Natural killer cell (primary cell): ENCODE measurements at regions of chr1 and their contacts with region 1.

Region 1: GRCh38 chr1:2194898-2195673 is 514 bp upstream of the FAAP20 start:
- DNase-seq: peak; percentile 89 to 92
- ATAC-seq: peak; percentile 69 to 84 (median 70)
- H3K4me3 ChIP-seq: peak overlapping the region; percentile 32
- H3K4me3 Mint-ChIP-seq: peak overlapping the region; percentile 90
- H3K27ac ChIP-seq: peak overlapping the region; percentile 88
- H3K27ac Mint-ChIP-seq: peak overlapping the region; percentile 91 to 94
- H3K4me1 ChIP-seq: peaks cover 46% of the 10 kb centered on the region
- H3K4me1 Mint-ChIP-seq: peaks cover 16 to 27% of the 10 kb centered on the region in 2 donors
- H3K27me3 ChIP-seq: no peaks in the 10 kb centered on the region
- H3K27me3 Mint-ChIP-seq: no peaks in the 10 kb centered on the region
- CTCF ChIP-seq: peak; percentile 90

Region 2: DNA sequence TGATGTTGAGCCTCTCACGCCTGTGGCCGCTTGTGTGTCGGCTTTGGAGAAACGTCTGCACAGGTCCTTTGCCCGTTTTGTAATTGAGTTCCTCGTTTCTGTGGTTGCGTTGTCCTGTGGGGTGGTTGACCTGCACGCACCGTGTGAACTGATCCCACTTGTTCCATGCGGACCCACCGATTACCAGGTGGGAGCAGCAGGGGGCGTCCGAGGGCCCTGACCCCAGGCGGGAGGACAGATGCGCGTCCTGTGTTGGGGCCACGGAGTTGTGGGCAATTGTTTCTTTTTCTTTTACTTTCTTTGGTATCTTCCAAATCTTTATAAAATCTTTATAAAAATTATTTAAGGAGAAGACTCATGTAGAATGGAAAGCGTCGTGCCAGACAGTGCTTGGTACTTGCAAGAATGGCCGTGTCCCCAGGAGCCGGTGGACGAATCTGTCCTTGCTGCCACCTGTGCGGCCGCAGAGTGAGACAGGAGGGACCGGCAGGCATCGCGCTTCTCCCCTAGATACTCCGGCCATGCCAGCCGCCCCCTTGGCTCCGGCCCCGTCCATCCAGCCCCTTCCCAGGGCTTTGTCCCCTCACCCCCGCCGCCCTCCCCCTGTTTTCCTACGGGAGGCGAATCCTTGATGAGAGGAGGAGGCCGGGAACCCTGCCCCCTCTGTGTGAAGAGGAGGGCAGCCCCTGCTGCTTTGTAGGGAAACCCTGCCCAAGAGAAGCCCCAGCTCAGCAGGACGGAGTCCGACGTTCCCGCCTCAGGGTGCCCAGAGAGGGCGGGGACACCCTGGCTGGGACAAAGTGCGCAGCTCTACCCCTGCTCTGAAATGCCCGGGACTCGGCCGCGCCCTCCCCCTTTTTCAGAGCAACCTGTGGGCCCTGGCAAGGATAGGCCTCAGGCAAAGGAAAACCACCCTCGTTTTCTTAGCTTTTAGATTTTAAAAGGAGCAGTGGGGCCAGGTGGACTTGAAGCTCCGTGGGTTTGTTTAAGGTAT is 103.2 kb before region 1 on chr1:
- intact Hi-C with region 1: no loop called
- DNase-seq: peak in 1 of 2 donors; percentile 60
- ATAC-seq: peak in 2 of 3 donors; percentile 40 to 59
- H3K4me3 ChIP-seq: no peak overlapping the region
- H3K4me3 Mint-ChIP-seq: no peak overlapping the region
- H3K27ac ChIP-seq: no peak overlapping the region
- H3K27ac Mint-ChIP-seq: no peak overlapping the region
- H3K4me1 ChIP-seq: no peaks in the 10 kb centered on the region
- H3K4me1 Mint-ChIP-seq: no peaks in the 10 kb centered on the region
- H3K27me3 ChIP-seq: no peaks in the 10 kb centered on the region
- H3K27me3 Mint-ChIP-seq: no peaks in the 10 kb centered on the region
- CTCF ChIP-seq: peak; percentile 45

Region 3: DNA sequence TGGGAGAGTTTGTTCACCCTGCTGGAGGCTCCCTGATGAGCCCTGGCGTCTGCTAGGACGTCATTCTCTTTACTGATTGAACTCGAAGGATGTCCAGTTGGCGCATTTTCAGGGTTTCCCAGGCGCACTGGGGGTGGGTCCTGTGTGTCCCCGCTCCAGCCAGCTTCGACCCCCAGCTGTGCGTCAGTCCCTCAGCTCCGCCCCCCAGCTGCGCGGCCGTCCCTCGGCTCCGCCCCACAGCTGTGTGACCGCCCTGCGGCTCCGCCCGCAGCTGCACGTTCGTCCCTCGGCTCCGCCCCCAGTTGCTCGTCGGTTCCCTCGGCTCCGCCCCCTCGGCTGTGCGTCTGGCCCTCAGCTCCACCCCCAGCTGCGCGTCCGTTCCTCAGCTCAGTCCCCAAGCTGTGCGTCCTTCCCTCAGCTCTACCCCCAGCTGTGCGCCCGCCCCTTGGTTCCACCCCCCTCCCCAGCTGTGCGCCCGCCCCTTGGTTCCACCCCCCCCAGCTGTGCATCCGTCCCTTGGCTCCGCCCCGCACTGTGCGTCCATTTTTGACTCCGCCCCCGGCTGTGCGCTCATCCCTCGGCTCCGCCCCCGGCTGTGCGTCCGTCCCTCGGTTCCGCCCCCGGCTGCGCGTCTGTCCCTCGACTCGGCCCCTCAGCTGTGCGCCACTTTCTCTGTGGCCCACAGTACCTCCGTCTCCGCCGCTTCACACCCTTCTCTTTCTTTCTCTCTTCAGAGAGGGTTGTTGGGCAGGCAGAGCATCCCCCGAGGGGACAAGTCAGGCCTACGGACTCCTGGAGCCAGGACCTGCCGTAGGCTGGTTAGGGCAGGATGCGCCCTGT is 61.8 kb before region 1 on chr1:
- intact Hi-C with region 1: loop called (anchors 1 kb)
- DNase-seq: peak; percentile 98 to 100
- ATAC-seq: peak; percentile 88 to 96 (median 89)
- H3K4me3 ChIP-seq: peak overlapping the region; percentile 50
- H3K4me3 Mint-ChIP-seq: peak overlapping the region; percentile 90
- H3K27ac ChIP-seq: peak overlapping the region; percentile 86
- H3K27ac Mint-ChIP-seq: peak overlapping the region; percentile 94
- H3K4me1 ChIP-seq: peaks cover 19% of the 10 kb centered on the region
- H3K4me1 Mint-ChIP-seq: peaks cover 12 to 13% of the 10 kb centered on the region in 2 donors
- H3K27me3 ChIP-seq: no peaks in the 10 kb centered on the region
- H3K27me3 Mint-ChIP-seq: no peaks in the 10 kb centered on the region
- CTCF ChIP-seq: no peak

Region 4: DNA sequence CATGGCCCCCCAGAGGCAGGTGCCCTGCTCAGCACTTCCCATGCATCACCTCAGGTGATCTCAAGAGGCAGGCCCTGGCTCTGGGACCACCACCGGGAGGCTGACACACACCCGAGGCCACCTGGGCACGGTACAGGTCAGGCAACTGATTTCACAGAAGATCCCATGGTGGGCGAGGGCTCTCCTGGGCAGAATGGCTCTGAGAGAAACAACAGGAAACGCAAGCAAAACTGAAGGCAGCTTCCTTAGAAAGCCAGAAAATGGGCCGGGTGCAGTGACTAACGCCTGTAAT is 21.6 kb after region 1 on chr1:
- intact Hi-C with region 1: no loop called
- DNase-seq: no peak
- ATAC-seq: no peak
- H3K4me3 ChIP-seq: no peak overlapping the region
- H3K4me3 Mint-ChIP-seq: no peak overlapping the region
- H3K27ac ChIP-seq: no peak overlapping the region
- H3K27ac Mint-ChIP-seq: no peak overlapping the region
- H3K4me1 ChIP-seq: peaks cover 16% of the 10 kb centered on the region
- H3K4me1 Mint-ChIP-seq: peaks cover 0 to 4% of the 10 kb centered on the region in 2 donors
- H3K27me3 ChIP-seq: peaks cover 5% of the 10 kb centered on the region
- H3K27me3 Mint-ChIP-seq: peaks cover 0 to 12% of the 10 kb centered on the region in 2 donors
- CTCF ChIP-seq: no peak

Region 5: GRCh38 chr1:2229037-2229864 is 34.2 kb after region 1 on chr1:
- intact Hi-C with region 1: loop called (anchors 5 kb)
- DNase-seq: peak; percentile 61 to 76
- ATAC-seq: peak; percentile 7 to 9 (median 8)
- H3K4me3 ChIP-seq: peak overlapping the region; percentile 58
- H3K4me3 Mint-ChIP-seq: peak overlapping the region; percentile 93
- H3K27ac ChIP-seq: peak overlapping the region; percentile 73
- H3K27ac Mint-ChIP-seq: peak overlapping the region; percentile 85 to 97
- H3K4me1 ChIP-seq: peaks cover 63% of the 10 kb centered on the region
- H3K4me1 Mint-ChIP-seq: peaks cover 38 to 60% of the 10 kb centered on the region in 2 donors
- H3K27me3 ChIP-seq: no peaks in the 10 kb centered on the region
- H3K27me3 Mint-ChIP-seq: peaks cover 0 to 2% of the 10 kb centered on the region in 2 donors
- CTCF ChIP-seq: no peak

Region 6: DNA sequence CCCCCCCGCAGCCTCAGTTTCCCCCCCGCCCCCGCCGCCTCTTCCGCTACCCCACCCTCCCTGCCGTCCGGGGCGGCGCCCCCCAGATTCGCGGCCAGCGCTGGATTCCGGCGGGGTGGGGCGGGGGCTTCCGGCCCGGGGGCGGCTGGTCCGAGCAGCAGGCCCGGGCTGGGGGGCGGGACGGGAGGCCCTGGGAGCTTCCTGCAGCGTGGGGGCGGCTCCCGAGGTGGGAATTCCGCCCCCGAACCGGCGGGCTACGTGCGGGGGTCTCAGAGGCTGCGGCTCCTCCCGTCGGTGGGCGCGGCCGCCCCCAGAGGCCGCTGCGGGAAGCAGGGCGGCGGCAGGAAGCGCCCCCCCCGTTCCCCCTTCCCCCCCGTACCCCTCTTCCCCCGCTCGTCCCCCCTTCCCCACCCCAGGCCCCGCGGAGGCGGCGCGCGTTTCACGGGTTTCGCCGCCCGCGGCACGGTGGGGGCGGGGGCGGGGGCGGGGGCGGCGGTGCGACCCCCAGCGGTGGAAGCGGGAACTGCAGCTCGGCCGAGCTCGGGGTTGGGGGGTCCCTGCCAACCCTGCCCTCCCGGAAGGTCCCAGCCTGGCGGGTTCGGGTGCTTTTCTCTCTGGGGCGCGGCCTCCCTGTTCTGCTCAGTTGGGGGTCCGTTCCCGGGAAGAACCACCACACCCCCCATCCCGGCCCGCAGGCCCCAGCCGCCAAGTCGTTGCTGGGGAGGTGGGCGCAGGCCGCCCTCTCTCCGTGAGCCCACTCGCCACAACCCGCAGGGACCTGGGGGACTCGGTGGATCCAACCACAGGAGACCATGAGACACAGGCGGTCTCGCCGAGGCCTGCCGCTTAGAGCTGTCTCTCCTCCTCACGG is 120.0 kb after region 1 on chr1:
- intact Hi-C with region 1: loop called (anchors 2 kb)
- DNase-seq: peak; percentile 67 to 86
- ATAC-seq: peak; percentile 72 to 84 (median 78)
- H3K4me3 ChIP-seq: peak overlapping the region; percentile 47
- H3K4me3 Mint-ChIP-seq: peak overlapping the region; percentile 66
- H3K27ac ChIP-seq: peak overlapping the region; percentile 83
- H3K27ac Mint-ChIP-seq: peak overlapping the region; percentile 69 to 83
- H3K4me1 ChIP-seq: peaks cover 58% of the 10 kb centered on the region
- H3K4me1 Mint-ChIP-seq: peaks cover 0 to 22% of the 10 kb centered on the region in 2 donors
- H3K27me3 ChIP-seq: no peaks in the 10 kb centered on the region
- H3K27me3 Mint-ChIP-seq: no peaks in the 10 kb centered on the region
- CTCF ChIP-seq: peak; percentile 99

Region 7: DNA sequence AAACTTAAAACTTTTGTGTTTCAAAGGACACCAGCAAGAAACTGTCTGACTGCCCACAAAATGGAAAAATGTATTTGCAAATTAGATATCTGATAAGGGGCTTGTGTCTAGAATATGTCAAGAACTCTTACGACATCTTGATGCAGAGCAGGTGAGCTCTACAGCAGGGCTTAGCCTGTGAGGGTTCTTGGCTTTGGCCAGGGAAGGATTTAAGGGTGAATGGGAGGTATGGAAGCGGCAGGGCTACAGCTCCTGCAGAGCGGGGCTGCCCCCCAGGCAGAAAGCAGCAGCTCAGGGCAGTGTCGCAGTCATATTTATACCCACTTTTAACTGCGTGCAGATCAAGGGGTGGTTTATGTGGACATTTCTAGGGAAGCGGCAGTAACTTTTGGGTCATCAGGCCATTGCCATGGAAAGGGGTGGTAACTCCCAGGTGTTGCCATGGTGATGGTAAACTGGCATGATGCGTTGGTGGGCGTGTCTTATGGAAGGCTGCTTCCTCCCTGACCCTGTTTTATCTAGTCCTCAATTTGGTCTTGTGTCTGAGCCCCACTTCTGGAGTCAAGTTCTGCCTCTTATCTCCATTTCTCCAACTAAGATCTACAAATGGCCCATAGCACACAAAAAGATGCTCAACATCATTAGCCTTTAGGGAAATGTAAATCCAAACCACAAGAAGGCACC is 173.1 kb after region 1 on chr1:
- intact Hi-C with region 1: no loop called
- DNase-seq: no peak
- ATAC-seq: no peak
- H3K4me3 ChIP-seq: no peak overlapping the region
- H3K4me3 Mint-ChIP-seq: no peak overlapping the region
- H3K27ac ChIP-seq: no peak overlapping the region
- H3K27ac Mint-ChIP-seq: no peak overlapping the region
- H3K4me1 ChIP-seq: no peaks in the 10 kb centered on the region
- H3K4me1 Mint-ChIP-seq: no peaks in the 10 kb centered on the region
- H3K27me3 ChIP-seq: no peaks in the 10 kb centered on the region
- H3K27me3 Mint-ChIP-seq: no peaks in the 10 kb centered on the region
- CTCF ChIP-seq: no peak

Region 8: GRCh38 chr1:2381741-2382620 is 186.9 kb after region 1 on chr1:
- intact Hi-C with region 1: loop called (anchors 1 kb)
- DNase-seq: peak; percentile 74 to 86
- ATAC-seq: peak; percentile 86 to 100 (median 96)
- H3K4me3 ChIP-seq: no peak overlapping the region
- H3K4me3 Mint-ChIP-seq: no peak overlapping the region
- H3K27ac ChIP-seq: no peak overlapping the region
- H3K27ac Mint-ChIP-seq: no peak overlapping the region
- H3K4me1 ChIP-seq: peaks cover 22% of the 10 kb centered on the region
- H3K4me1 Mint-ChIP-seq: no peaks in the 10 kb centered on the region
- H3K27me3 ChIP-seq: no peaks in the 10 kb centered on the region
- H3K27me3 Mint-ChIP-seq: no peaks in the 10 kb centered on the region
- CTCF ChIP-seq: peak; percentile 77

Region 9: DNA sequence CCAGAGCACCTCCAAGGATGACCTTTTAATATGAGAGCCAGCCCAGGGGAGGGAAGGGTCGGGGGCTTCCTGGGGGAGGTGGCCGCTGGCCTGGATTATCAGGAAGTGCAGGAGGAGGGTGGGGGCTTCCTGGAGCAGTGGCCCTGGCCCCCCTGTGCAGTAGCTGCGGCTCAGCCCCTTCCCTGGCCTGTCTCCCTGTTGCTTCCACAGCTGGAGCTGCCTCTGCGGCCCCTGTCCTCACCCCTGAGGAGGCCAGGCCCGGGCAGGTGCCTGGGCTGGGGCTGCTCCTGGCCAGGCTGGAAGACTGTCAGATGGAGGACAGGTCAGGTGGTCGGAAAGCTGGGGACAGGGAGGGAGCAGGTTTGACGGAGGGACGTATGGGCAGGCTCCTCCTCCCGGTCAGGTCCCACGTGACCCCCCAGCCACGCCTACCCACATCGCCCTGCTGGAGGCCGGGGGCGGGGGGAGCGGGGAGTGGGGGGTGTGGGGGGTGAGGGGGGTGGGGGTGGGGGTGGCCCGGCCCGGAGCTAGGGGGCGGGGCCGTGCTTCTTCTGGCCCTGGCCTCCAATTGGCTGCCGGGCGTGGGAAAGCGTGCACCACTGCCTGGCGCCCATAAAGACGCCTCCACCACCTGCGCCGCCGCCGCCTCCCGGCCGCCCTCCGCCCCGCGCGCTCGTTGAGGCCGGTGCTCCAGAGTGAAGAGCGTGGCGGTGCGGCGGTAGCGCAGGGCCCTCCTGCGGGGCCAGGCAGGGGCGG is 350.9 kb after region 1 on chr1:
- intact Hi-C with region 1: loop called (anchors 10 kb)
- DNase-seq: peak; percentile 85 to 95
- ATAC-seq: peak; percentile 52 to 75 (median 65)
- H3K4me3 ChIP-seq: peak overlapping the region; percentile 93
- H3K4me3 Mint-ChIP-seq: peak overlapping the region; percentile 94
- H3K27ac ChIP-seq: peak overlapping the region; percentile 97
- H3K27ac Mint-ChIP-seq: peak overlapping the region; percentile 94 to 97
- H3K4me1 ChIP-seq: peaks cover 68% of the 10 kb centered on the region
- H3K4me1 Mint-ChIP-seq: peaks cover 0 to 31% of the 10 kb centered on the region in 2 donors
- H3K27me3 ChIP-seq: no peaks in the 10 kb centered on the region
- H3K27me3 Mint-ChIP-seq: no peaks in the 10 kb centered on the region
- CTCF ChIP-seq: no peak

Region 10: DNA sequence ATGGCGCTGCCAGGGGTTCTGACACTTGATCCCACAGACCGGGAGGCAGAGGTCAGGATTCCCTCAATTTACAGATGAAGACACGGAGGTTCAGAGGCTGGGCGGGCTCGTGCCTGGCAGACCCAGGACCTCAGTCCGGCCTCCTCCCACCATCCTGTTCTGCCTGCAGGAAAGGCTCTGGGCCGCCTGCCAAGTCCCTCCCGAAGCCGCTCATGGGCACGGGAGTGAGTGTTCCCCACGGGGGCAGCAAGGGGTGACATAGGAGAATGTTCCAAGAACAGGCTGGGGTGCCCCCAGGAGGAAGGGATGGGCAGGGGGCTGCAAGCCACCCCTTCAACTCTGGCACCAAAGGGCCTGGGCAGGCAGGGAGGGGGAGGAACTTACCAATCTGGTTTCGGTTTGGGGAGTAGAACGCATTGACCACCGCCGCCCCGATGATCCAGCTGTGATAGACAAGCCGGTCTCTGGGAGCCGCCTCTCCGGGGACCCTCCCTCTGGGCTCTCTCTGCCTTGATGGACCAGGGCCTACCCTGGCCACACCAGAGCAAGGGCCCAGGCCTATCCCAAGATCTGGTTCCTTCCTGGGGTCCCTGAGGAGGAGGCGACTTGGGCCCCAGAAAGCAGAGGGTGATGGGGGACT is 399.0 kb after region 1 on chr1:
- intact Hi-C with region 1: no loop called
- DNase-seq: no peak
- ATAC-seq: no peak
- H3K4me3 ChIP-seq: no peak overlapping the region
- H3K4me3 Mint-ChIP-seq: no peak overlapping the region
- H3K27ac ChIP-seq: no peak overlapping the region
- H3K27ac Mint-ChIP-seq: no peak overlapping the region
- H3K4me1 ChIP-seq: peaks cover 11% of the 10 kb centered on the region
- H3K4me1 Mint-ChIP-seq: peaks cover 0 to 13% of the 10 kb centered on the region in 2 donors
- H3K27me3 ChIP-seq: no peaks in the 10 kb centered on the region
- H3K27me3 Mint-ChIP-seq: peaks cover 4 to 8% of the 10 kb centered on the region in 2 donors
- CTCF ChIP-seq: no peak

Region 11: DNA sequence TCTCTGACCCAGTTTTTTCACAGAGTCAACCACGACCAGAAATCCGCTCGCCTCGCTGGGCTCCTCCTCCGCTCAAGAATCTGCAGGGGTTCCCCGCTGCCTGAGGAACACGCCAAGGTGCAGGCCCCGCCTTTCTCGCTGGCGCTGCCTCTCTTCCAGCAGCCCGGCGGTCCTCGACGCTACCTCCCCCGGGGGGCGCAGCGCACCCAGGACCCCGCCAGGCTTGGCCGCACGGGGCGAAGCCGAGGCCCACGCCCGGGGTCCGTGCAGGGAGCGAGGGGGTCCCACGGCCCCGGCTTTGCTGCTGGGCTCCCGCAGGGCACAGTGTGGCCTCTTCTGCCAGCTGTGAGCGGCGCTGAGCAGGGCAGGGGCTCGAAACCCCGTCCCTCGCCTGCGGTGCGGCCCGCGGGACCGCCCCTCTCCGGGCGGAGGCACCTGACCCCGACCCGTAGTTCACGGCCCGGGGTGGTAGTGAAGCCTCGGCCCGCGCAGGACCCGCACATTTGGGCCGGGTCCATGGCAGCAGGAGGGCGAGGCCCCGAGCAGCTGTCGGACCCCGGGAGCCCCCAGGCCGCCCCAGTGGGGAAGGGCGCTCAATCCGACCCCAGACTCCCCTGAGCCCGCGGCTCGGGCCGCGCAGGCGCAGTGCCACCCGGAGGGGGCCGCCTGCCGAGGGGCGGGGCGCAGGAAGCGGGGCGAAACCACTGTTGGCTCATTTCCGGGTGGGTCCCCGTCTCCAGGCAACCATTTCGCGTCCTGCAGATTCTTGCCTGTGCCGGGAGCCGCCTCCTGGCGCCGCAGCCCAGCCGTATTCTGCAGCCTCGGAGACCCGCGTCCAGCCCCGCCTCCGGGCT is 447.7 kb after region 1 on chr1:
- intact Hi-C with region 1: loop called (anchors 10 kb)
- DNase-seq: peak; percentile 95 to 97
- ATAC-seq: peak; percentile 85 to 87 (median 86)
- H3K4me3 ChIP-seq: peak overlapping the region; percentile 70
- H3K4me3 Mint-ChIP-seq: peak overlapping the region; percentile 86
- H3K27ac ChIP-seq: peak overlapping the region; percentile 96
- H3K27ac Mint-ChIP-seq: peak overlapping the region; percentile 80 to 97
- H3K4me1 ChIP-seq: peaks cover 22% of the 10 kb centered on the region
- H3K4me1 Mint-ChIP-seq: peaks cover 10 to 18% of the 10 kb centered on the region in 2 donors
- H3K27me3 ChIP-seq: no peaks in the 10 kb centered on the region
- H3K27me3 Mint-ChIP-seq: peaks cover 0 to under 1% of the 10 kb centered on the region in 2 donors
- CTCF ChIP-seq: no peak